Heart left ventricle (tissue), 16 donors: ENCODE measurements at regions of chr16 and their contacts with region 1.

Region 1: DNA sequence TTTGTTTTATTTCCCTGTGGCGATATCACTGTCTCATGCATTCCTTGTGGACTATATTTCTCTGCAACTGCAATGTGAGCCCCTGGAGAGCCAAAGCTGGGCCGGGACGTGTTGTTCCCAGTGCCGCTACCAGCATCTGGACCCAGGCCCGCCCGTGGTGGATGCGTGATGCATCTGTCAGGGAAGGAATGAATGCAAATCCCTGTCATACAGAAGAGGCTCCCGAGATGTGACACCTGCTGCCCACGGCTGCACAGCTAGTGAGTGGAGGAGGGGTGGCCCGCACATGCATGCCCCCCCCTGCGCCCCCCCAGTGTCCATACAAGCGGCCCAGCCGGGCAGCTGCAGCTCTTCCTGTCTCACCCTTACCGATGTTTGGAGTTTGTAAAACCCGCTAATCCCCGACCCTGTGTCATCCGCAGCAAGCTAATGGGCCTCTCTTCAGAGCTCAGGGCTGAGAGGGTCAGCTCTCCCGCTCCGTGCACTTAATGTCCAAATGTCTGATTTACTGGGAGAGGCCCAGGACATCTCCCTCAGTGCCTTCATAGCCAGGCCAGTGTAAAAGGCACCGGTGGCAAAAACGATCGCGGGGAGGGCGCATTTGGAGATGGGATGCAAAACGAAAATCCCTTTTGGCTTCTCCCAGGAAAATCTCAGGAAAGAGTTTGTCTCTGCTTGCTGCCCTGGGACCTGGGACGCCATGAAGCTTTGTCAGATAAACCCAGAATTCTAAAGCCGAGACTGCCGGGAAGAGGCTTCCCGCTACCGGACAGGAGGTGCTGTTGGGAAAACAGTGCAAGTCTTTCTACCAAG is 91.8 kb downstream of the FOXL1 start:
- DNase-seq: peak in 3 of 5 donors; percentile 46 to 71 (median 71)
- ATAC-seq: peak in 2 of 4 donors; percentile 11 to 25
- H3K4me3 ChIP-seq: no peak overlapping the region
- H3K27ac ChIP-seq: peak overlapping the region; percentile 36 to 76 (median 56)
- H3K4me1 ChIP-seq: peaks cover 0 to 48% (median 12%) of the 10 kb centered on the region in 12 donors
- H3K27me3 ChIP-seq: peaks cover 0 to 45% (median 5%) of the 10 kb centered on the region in 9 donors
- CTCF ChIP-seq: no peak
- POLR2A ChIP-seq: no peak

Region 2: DNA sequence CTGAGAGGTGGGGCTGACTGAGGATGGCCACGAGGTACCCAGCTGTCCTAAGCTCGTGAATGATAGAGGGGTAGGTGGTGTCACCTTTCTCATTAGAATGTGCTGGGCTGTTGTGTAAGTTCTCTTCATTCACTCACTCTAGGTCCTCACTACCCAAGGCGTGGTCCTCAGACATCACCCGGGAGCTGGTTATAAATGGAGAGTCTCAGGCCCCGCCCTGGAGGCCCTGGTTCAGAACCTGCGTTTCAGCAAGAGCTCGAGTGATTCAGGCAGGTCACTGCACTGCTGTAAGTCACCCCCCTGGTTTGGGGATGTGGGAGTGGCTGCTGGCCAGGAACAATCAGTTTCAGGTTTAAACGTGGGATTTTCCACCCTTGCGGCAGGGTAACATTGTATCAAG is 48.0 kb after region 1 on chr16:
- intact Hi-C with region 1: no loop called
- DNase-seq: no peak
- ATAC-seq: no peak
- H3K4me3 ChIP-seq: no peak overlapping the region
- H3K27ac ChIP-seq: no peak overlapping the region
- H3K4me1 ChIP-seq: no peaks in the 10 kb centered on the region
- H3K27me3 ChIP-seq: peaks cover 0 to 10% (median 0%) of the 10 kb centered on the region in 9 donors
- CTCF ChIP-seq: no peak
- POLR2A ChIP-seq: no peak

Region 3: GRCh38 chr16:86732621-86733295 is 62.6 kb after region 1 on chr16:
- intact Hi-C with region 1: loop called in 1 of 10 experiments (anchors 5 kb)
- DNase-seq: no peak
- ATAC-seq: peak in 1 of 4 donors; percentile 44
- H3K4me3 ChIP-seq: no peak overlapping the region
- H3K27ac ChIP-seq: no peak overlapping the region
- H3K4me1 ChIP-seq: no peaks in the 10 kb centered on the region
- H3K27me3 ChIP-seq: peaks cover 0 to 24% (median 15%) of the 10 kb centered on the region in 9 donors
- CTCF ChIP-seq: no peak
- POLR2A ChIP-seq: no peak